Gastrocnemius medialis (tissue), 4 donors: ENCODE measurements at regions of chr4 and their contacts with region 1.

Region 1: DNA sequence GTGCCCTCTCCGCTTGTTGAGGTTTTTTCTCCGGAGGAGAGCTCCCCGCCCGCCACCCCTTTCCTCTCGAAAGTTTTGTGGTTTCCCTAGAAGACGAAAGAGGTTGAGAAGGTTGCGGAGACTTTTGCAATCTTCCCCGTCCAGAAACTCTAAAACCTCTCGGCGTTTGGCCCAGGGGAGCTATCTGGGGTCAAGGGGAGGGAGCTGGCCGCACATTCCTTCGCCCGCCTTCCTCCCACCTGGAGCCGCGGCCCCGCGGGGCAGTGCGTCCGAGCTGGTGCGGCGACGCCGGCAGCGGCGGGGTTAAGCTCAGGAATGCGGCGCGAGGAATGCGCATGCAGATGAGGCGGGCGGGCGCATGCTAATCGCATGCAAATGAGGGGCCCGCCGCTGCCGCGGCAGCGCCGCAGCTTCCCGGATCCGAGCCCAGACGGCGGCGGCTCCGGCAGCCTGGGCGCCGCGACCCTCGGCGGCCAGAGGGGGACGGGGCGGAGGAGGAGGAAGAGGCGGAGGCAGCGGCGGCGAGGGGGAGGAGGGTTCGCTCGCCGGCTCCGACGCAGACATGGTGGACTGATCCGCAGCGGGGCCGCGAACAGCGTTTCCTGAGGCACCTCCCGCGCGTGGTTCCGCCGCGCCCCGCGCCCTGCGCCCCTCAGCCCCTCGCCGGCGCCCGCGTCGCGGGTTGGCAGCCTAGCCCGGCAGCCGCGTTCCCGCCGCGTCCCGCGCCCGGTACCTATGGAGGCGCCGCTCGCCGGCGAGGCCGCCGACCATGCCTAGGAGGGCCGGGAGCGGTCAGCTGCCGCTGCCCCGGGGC is at the start of gene WWC2:
- DNase-seq: peak; percentile 68 to 72
- ATAC-seq: peak; percentile 82 to 86
- H3K4me3 ChIP-seq: peak within 1 kb of the TSS; percentile 80 to 91 (median 86)
- H3K27ac ChIP-seq: peak within 1 kb of the TSS; percentile 79 to 88 (median 85)
- H3K4me1 ChIP-seq: peaks cover 13 to 15% of the 10 kb centered on the region in 2 donors
- H3K27me3 ChIP-seq: no peaks in the 10 kb centered on the region
- CTCF ChIP-seq: no peak
- POLR2A ChIP-seq: peak; percentile 47 to 69
- total RNA-seq, gene WWC2: 4.5 to 10.7 (median 8.6) TPM

Region 2: DNA sequence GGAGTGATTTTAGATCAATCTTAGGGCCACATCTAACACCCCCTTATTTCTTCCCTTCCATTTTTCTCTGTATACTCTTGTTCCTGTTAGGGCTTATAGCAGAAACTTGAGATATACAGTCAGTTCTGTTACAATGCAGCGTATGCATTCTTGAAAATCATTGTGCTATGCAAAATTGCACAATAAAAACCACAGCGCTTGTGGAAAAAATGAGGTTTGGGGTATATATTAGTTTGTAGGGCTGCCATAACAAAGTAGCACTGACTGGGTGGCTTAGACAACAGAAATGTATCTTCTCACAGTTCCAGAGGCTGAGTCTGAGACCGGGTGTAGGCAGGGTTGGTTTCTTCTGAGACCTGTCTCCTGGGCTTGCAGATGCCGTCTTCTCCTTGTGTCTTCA is 59.1 kb after region 1 on chr4:
- in situ Hi-C with region 1: no loop called
- intact Hi-C with region 1: no loop called
- DNase-seq: no peak
- ATAC-seq: no peak
- H3K4me3 ChIP-seq: no peak overlapping the region
- H3K27ac ChIP-seq: no peak overlapping the region
- H3K4me1 ChIP-seq: peaks cover 0 to 5% of the 10 kb centered on the region in 2 donors
- H3K27me3 ChIP-seq: no peaks in the 10 kb centered on the region
- CTCF ChIP-seq: no peak
- POLR2A ChIP-seq: no peak

Region 3: DNA sequence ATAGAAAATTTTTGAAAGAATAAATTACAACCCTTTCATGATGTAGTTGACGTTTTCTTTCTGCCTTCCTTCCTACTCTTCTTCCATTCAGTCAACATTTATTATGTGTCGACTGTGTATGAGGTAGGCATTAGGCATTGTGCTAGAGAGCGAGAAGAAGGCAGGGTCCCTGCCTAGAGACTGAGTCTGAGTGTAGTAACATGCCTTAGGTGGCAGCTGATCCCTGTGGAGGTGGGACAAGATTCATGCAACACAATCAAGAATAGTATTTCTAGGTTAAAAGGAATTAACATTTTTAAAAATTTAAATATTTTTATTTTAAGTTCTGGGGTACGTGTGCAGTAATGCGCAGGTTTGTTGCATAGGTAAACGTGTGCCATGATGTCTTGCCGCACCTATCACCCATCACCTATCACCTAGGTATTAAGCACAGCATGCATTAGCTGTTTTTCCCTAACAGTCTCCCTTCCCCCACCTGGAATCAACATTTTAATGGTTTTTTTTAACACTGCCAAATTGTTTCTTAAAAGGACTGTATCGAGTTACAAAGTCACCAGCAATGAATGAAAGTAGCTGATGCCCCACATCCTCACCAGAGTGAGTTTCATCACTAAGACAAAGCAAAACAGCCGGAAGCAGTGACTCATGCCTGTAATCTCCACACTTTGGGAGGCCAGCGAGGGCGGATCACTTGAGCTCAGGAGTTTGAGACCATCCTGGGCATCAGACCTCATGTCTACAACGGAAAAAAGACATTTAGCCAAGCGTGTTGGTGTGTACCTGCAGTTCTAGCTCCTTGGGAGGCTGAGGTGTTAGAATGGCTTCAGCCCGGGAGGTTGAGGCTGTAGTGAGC is 84.2 kb after region 1 on chr4:
- in situ Hi-C with region 1: no loop called
- intact Hi-C with region 1: no loop called
- DNase-seq: peak in 1 of 2 donors; percentile 13
- ATAC-seq: peak in 1 of 2 donors; percentile 62
- H3K4me3 ChIP-seq: no peak overlapping the region
- H3K27ac ChIP-seq: no peak overlapping the region
- H3K4me1 ChIP-seq: no peaks in the 10 kb centered on the region
- H3K27me3 ChIP-seq: no peaks in the 10 kb centered on the region
- CTCF ChIP-seq: no peak
- POLR2A ChIP-seq: no peak

Region 4: GRCh38 chr4:183444214-183445066 is 345.5 kb after region 1 on chr4 and contains the start of gene CDKN2AIP:
- in situ Hi-C with region 1: no loop called
- intact Hi-C with region 1: loop called (anchors 10 kb)
- DNase-seq: peak; percentile 85 to 89
- ATAC-seq: peak; percentile 89 to 92
- H3K4me3 ChIP-seq: peak within 1 kb of the TSS; percentile 63 to 98 (median 98)
- H3K27ac ChIP-seq: peak within 1 kb of the TSS; percentile 96 to 98 (median 97)
- H3K4me1 ChIP-seq: peaks cover 50 to 54% of the 10 kb centered on the region in 2 donors
- H3K27me3 ChIP-seq: no peaks in the 10 kb centered on the region
- CTCF ChIP-seq: peak in 2 of 5 experiments; percentile 25 to 30
- POLR2A ChIP-seq: peak; percentile 98 to 99
- total RNA-seq, gene CDKN2AIP: 9.2 to 17.3 (median 12.2) TPM